Calu3 (cell line): ENCODE measurements at regions of chr10 and their contacts with region 1.

Region 1: DNA sequence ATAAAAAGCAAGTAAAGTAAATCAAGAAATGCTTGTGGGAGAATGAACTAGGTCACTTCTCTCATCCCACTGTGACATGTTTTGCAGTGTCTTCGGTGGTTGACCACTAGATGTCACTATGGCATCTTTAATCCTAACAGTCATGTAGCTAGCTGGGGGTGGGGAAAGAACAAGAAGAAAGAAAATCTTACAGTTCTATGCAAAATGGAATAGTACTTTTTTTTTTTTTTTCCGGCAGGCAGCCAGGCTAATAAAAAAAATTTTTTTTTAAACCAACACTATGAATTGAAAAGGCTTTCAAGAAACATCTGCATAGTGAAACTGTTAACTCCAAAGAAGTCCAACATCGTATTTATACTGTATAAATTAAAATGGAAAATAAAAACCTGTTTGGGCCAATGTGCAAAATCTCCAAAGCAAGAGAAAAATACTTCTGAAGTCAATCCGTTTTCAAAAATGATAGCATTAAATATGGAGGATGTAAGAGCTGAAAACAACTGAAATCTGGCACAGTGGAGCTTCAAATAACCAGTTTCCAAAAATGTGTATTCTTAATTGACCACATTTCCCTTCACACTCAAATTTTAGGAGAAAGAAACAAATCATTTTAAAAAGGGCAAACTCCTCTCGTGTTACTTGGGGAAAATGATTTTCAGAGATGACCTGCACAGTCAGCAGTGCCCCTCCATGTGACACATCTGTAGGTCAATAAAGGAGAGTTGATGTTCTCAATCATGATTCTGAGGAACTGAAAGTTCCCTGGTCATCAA is 38.5 kb downstream of the CDK1 start:
- DNase-seq: peak; percentile 55
- H3K4me3 Mint-ChIP-seq: no peak overlapping the region
- H3K27ac Mint-ChIP-seq: no peak overlapping the region
- H3K4me1 Mint-ChIP-seq: no peaks in the 10 kb centered on the region
- H3K27me3 Mint-ChIP-seq: no peaks in the 10 kb centered on the region
- CTCF ChIP-seq: peak; percentile 83

Region 2: GRCh38 chr10:61140765-61141392 is 324.1 kb after region 1 on chr10:
- CTCF ChIA-PET with region 1: no interaction called
- intact Hi-C with region 1: loop called (anchors 1 kb)
- DNase-seq: peak; percentile 26
- H3K4me3 Mint-ChIP-seq: no peak overlapping the region
- H3K27ac Mint-ChIP-seq: no peak overlapping the region
- H3K4me1 Mint-ChIP-seq: peaks cover 14% of the 10 kb centered on the region
- H3K27me3 Mint-ChIP-seq: no peaks in the 10 kb centered on the region
- CTCF ChIP-seq: peak; percentile 51

Region 3: DNA sequence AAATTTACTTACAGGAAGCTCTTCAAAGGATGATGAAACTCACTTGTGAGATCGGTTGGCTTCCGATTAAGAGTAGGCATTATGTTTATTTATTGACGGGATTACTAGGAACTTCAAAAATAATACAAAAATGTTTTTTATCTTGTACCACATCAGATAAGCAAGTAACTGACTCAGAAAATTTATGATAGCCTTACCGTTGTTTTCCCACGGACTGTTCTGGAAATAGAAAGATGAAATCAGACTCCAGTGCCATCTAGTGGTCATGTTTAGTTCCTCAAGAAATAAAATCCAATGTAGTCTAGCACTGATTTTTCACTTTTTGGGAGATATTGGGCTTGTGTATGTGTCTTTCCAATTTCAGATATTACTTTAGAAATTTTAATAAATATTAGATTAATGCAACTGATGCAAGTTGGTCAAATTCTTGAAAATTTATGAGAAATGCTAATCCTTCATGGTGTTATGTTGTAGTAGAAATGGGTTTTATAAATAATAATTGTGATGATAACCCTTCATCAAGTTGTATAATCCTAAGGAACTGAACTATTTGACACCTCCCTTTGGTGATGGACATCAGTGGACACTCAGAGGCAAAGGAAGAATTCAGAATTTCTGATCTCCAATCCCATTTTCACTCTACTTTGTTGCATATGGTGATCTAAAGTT is 467.5 kb after region 1 on chr10:
- CTCF ChIA-PET with region 1: interaction called, 3 read pairs
- intact Hi-C with region 1: loop called (anchors 1 kb)
- DNase-seq: peak; percentile 16
- H3K4me3 Mint-ChIP-seq: no peak overlapping the region
- H3K27ac Mint-ChIP-seq: no peak overlapping the region
- H3K4me1 Mint-ChIP-seq: peaks cover 10% of the 10 kb centered on the region
- H3K27me3 Mint-ChIP-seq: no peaks in the 10 kb centered on the region
- CTCF ChIP-seq: peak; percentile 89

Region 4: DNA sequence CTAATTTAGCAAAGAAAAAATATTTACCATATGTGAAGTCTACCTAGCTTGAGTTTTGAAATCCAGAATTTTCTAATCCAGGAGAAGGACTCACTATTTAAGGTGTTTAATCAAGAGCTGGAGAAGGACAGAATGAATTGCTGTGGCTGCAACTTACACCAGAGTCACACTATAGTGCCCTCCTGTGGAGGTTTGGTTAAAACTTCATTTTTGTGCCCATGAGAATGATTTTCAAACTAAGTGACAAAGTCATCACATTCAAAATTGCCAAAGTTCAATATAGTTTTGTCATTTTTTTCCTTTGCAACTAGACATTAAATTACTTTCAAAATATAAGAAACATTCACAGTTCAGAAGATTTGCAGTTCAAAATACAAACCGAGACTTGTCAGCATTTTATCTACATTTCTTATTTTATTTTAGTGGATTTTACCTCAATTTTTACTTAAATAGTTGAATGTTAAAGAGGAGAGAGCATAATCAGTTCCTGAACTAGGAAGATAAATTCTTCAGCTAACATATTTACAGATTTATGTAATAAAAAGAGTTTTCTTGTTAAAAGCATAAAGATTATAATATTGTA is 916.6 kb after region 1 on chr10:
- CTCF ChIA-PET with region 1: no interaction called
- intact Hi-C with region 1: loop called (anchors 5 kb)
- DNase-seq: peak; percentile 64
- H3K4me3 Mint-ChIP-seq: no peak overlapping the region
- H3K27ac Mint-ChIP-seq: no peak overlapping the region
- H3K4me1 Mint-ChIP-seq: no peaks in the 10 kb centered on the region
- H3K27me3 Mint-ChIP-seq: peaks cover 32% of the 10 kb centered on the region
- CTCF ChIP-seq: no peak